ENCODE measurements at regions of chr18 and their contacts with region 1.

Region 1: DNA sequence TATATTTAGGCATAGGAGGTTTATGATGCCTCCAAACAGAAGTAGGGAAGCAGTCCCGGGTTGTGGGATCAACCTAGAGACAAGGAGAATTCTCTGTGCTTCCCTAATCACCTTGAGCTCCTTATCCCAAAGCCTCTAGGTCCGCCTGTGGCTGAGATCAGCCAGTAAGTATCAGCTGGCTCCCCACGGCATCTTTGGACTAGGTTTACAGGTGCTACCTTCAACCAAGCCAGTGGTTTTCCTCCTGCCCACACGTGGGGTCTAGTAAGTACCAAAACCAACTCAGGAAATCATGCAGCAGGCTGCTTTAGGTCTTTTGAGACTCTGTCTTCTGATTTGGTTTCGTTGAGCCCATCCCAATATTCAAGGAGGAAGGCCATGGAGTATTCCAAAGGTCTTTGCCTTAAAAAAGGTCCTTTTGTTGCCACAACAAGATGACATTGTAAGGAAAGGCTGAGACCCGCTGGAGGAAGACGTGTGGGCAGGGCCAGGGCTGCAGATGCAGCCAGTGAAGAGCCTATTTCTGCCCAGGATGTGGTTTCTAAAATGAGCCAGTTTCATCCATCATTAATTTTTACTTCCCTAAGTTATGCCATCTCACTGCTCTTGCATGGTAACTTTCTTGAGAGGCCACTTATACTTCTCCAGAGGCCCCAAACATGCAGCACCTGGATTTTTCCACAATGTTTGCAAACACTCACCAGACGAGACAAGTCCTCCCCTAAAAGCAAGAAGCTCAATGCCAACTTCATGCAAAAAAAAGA is 248.7 kb downstream of the RNF152 start:
- DNase-seq: no peak
- H3K4me3 ChIP-seq: no peak overlapping the region
- H3K4me1 ChIP-seq: no peaks in the 10 kb centered on the region; the same call in 1 of the 2 replicates
- H3K27me3 ChIP-seq: no peaks in the 10 kb centered on the region

Region 2: GRCh38 chr18:61335684-61336555 is 308.1 kb before region 1 on chr18:
- in situ Hi-C with region 1: no loop called
- DNase-seq: no peak
- H3K4me3 ChIP-seq: no peak overlapping the region
- H3K4me1 ChIP-seq: no peaks in the 10 kb centered on the region
- H3K27me3 ChIP-seq: peaks cover 18% of the 10 kb centered on the region

Region 3: DNA sequence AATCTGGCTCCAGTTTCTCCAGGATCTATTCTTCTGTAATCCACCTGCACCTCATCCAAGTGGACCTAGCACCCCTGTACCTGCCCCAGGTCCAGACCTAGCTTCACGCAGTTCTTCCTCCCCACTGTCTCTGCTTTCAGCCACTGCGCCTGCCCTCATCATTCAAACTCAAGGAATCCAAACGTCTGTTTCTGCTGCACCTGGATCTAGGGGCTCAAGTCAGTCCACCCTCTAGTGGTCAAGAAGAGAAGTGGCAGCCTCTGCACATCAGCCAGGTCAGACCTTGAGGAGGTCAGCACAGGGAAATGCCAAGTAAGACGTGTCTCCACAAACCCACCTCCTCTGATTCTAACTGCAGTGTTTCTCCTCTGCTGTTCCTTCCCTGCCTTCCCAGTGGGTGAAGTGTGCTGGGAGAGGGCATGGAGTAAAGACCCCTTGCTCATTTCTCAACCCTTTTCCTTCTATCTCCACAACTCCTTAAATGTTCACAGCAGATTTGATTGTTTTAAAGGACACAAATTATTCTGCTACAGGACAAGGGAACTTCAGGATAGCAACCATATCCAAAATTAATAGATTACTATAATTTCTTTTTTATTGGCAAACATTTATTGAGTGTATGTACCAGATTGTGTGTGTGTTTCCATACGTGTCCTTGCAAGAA is 257.4 kb after region 1 on chr18:
- in situ Hi-C with region 1: loop called (anchors 10 kb)
- DNase-seq: peak; percentile 65 to 66
- H3K4me3 ChIP-seq: no peak overlapping the region
- H3K4me1 ChIP-seq: no peaks in the 10 kb centered on the region
- H3K27me3 ChIP-seq: no peaks in the 10 kb centered on the region

Region 4: DNA sequence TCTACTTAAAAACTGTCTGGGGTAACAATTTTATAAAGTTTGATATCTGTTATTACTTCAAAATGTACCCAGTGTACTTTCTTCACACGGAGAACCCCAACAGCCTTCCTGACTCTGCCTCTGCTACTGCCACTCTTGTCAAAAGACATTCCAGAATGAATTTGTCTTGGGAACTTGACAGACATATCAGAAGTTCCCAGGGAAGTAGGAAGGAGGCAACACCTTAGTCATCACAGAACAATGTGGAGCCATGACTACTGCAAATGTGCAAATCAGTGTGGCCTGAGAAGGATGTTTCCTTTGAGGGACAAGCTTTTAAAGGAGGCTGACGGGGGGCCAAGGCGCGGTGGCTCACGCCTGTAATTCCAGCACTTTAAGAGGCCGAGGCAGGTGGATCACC is 382.5 kb after region 1 on chr18:
- in situ Hi-C with region 1: no loop called
- DNase-seq: no peak
- H3K4me3 ChIP-seq: no peak overlapping the region
- H3K4me1 ChIP-seq: peaks cover 11% of the 10 kb centered on the region
- H3K27me3 ChIP-seq: no peaks in the 10 kb centered on the region